Cardiac septum (tissue), 1 donor: ENCODE measurements at regions of chr18 and their contacts with region 1.

Region 1: DNA sequence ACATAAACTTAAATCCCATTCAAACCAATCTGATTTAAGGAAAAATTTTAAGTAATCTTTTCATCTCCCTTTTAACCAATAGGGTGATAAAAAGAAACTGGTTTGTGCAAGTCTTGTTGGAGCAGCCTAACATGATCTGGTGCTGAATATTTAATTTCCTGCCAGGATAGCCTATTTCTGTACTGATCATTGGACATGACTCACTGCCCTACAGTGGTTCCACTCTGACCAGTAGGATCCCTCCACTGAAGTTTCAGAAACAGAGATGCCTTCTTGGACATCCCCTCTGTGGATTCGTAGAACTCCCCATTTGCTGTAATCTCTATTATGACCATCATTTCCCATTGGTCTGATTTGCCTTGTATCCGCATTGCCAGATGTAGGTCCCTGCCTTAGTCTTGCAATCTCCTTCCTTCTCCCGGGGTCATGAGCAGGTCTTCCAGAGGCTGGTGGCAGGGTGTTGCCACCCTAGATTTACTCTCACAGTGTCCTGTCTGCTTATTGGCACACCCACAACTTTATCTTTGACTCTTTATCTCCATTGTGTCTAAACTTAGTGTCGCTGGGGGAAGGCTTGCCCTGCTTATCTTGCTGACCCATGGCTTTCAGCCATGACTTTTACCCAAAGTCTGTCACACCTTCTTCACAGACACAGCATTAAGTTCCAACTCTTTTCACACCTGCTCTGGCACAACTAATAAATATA is 12.3 kb upstream of the SETBP1 start:
- DNase-seq: no peak

Region 2: GRCh38 chr18:44594799-44595467 is 73.5 kb before region 1 on chr18:
- intact Hi-C with region 1: loop called (anchors 5 kb)
- DNase-seq: no peak

Region 3: DNA sequence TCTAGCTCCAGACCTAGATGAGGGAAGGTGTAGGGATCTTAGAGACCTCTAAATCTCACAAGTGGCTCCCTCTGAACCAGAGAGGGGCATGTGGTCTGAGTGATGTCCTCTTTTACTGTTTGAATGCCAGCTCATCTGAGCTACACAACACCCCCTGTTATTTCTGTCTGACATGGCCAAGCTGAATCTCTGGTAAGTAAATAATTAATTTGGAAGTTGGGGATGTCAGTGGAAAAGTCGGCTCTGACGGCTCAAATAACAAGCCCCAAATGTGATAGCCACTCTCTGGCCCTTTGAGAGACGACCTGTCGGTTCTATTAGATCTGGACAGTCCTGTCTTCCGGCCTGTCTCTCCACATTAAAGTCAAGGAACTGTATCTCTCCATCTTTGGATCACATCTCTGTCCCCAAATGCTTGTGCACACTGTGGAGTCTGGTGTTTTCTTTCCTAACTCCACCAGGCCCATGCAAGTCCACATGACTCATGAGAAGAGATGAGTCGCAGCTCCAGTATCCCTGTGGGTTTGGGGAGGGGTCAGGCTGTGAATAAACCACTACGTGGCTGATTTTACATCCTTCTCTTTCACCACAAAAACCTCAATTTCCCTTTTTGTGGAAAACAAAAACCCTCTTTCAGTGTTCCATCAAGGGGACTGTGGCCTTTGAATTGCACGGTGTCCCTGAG is 64.8 kb after region 1 on chr18:
- intact Hi-C with region 1: no loop called
- DNase-seq: no peak